HAP-1 (cell line): ENCODE measurements at regions of chr18 and their contacts with region 1.

Region 1: DNA sequence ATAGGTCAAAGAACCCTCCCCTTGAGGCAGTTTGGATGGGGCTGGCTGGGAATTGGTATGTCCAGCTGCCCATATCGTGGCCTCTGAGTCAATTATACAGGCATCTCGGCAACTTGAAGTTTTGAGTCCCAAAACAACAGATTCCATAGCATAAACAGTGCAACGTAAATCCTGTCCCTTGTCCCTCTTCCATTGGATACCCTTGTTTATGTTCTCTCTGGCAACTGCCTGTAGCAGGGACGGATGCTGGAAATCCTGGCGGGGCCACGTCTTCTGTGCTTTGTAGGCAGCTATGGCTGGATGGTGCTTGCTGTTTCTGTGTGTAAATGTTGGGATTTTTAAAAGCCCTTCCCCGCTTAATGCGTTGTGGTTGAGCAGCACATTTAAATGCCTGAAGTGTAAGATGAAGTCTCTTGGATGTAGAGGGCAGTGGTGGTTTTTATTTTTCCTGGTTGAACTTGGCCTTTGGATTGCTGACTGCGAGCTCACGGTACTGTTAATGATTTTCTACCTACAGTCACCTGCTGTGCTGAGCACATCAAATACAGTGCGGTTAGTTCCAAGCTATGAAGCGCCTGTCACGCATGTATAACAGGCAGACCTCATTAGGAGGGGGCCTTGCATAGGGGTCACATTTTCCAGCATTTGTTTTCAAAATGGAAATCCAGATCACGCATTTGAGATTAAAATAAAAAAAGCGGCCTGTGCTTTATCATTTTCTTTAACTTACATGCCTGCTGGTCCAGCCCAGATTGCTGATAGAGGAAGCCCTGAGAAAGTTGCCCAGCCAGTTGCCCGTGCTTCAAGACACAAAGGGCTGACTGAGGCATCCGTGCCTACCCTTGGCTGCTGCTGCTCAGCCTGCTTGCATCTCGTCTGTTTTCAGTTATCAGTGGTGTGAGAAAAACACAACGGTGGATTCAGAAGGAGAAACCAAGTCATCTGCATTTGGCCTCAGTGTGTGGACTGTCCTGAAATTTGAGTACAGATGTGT is 84.7 kb downstream of the NEDD4L start:
- DNase-seq: no peak
- H3K4me3 ChIP-seq: no peak overlapping the region
- H3K4me1 ChIP-seq: no peaks in the 10 kb centered on the region
- H3K27me3 ChIP-seq: no peaks in the 10 kb centered on the region

Region 2: GRCh38 chr18:58044380-58045241 is 84.1 kb before region 1 on chr18:
- in situ Hi-C with region 1: loop called (anchors 5 kb)
- DNase-seq: peak; percentile 48 to 68
- H3K4me3 ChIP-seq: peak overlapping the region; percentile 79
- H3K4me1 ChIP-seq: peaks cover 8% of the 10 kb centered on the region
- H3K27me3 ChIP-seq: no peaks in the 10 kb centered on the region

Region 3: DNA sequence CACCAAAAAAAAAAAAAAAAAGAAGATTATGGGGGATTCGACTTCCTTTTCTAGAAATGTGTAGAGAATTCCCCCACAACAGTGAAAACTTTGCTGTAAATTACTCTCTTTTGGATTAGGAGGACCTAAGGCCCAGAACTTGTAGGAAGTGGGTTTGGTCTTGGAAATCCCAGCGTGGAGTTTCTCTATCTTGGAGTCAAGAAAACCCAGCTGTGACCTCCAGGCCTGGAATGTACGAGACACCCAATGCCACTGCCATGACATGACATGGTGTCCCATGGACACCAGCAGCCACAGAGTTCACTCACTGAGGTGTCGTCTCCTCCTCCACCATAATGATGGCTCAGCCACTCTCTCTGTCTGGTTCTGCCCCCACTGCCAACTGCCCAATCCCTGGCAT is 297.9 kb after region 1 on chr18:
- in situ Hi-C with region 1: no loop called
- DNase-seq: no peak
- H3K4me3 ChIP-seq: no peak overlapping the region
- H3K4me1 ChIP-seq: no peaks in the 10 kb centered on the region
- H3K27me3 ChIP-seq: no peaks in the 10 kb centered on the region